OCI-LY7 (cell line): ENCODE measurements at regions of chr11 and their contacts with region 1.

Region 1: DNA sequence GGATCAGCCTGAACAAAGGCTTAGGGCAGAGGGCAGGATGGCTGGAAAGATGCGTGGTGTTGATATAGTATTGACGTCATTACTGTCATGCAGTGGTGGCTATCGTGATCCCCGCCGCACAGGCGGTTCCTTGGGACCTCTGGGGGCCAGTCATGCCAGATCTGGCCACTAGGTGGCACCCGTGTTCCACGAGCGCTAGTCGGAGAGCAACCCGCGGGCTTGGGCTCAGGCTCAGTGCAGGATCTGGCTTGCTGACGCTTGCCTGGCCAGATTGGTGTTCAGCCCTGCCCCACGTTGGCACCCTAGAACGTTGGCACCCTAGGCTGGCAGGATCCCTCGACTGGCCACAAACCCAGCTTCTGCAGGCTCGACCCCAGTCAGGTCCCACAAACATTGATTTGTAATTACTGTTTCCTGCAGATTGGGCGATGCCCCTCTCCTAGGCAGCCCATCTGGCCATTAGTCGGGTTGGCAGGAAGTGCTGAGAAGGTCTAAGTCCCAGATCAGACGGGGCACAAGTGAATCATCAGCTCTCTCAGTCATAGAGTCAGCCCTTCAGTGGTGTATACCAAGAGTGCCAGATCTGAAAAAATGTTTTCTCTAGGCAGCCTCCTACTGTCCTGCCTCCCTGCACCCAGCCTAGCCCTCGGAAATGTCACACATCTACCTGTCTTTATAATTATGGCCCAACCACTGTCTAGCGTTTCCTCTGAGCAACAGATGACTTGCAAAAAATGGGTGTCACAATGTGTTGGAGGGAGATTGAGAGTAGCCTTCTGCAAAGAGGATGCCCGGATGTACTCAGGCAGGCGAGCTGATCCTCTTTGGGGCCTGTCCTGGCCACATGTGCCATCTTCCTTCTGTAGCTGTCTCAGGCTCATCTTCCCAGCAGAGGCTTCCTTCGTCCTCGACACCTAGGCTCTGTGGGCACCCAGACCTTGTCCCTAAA is 315.3 kb downstream of the TMEM135 start:
- DNase-seq: peak; percentile 91
- H3K4me3 ChIP-seq: no peak overlapping the region
- H3K27ac ChIP-seq: peak overlapping the region; percentile 92
- H3K4me1 ChIP-seq: peaks cover 79% of the 10 kb centered on the region
- CTCF ChIP-seq: peak; percentile 96

Region 2: DNA sequence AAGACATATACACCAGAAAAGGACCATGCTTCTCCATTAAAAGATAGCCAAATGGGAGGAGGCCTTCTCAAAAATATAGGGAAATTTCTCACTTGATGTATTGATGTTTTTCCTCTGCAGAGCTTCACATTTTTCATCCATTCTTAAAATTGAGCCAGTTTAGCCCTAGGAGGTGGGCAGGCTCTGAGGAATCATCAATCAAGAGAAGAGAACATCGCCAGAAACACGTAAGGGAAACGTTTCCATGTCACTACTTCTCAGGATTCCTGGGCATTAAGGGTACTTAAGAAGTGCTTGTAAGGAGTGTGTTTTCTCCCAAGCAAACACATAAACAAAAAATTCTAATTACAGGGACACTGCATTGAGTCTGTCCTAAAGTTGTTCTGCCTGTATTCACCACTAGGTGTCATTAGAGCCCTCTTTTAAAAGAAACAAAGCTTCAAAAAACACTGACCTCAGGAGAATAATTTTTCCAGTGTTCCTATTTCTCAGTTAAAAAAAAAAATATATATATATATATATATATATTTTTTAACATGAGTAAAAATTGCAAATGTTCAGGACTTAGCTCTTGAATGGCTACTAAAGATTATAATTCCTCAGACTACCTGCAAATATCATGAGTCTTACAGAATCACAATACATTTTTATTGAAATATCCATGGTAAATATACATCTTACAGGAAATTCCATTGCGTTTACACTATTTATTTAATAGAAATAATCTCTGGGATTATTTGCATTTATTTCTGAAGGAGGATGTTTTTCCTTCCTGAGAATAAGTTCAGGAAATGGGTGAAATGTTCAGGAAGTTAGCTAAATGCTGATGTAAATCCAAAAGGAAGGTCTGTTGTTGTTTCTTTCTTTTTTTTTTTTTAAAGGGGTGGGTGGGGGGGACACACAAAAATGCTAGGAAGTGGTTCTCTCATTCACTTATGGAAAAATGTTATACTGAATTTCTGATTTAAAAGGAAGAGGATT is 413.8 kb before region 1 on chr11:
- CTCF ChIA-PET with region 1: interaction called, 4 read pairs
- POLR2A ChIA-PET with region 1: no interaction called
- intact Hi-C with region 1: loop called (anchors 2 kb)
- DNase-seq: peak; percentile 62
- H3K4me3 ChIP-seq: no peak overlapping the region
- H3K27ac ChIP-seq: no peak overlapping the region
- H3K4me1 ChIP-seq: no peaks in the 10 kb centered on the region
- CTCF ChIP-seq: peak; percentile 80

Region 3: DNA sequence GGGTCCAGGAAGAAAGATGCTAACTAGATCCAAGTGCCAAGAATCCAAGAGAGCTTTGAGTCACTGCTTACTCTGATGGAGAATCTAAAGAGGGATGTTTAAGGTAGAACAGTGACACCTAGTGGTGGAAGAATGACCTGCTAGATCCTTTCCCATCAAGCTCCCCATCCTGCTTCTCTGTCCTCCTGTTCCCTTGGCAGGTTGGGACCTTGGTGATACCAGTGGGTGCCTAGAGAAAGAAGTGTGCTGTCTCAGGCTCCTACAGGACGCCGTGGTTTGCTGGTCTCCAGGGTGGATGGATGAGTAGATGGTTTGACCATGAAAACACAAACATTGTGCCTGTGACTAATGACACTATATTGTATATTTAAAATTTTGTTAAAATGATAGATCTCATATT is 68.4 kb after region 1 on chr11:
- CTCF ChIA-PET with region 1: interaction called, 42 read pairs
- POLR2A ChIA-PET with region 1: interaction called, 17 read pairs
- intact Hi-C with region 1: loop called (anchors 1 kb)
- DNase-seq: peak; percentile 82
- H3K4me3 ChIP-seq: no peak overlapping the region
- H3K27ac ChIP-seq: no peak overlapping the region
- H3K4me1 ChIP-seq: peaks cover 33% of the 10 kb centered on the region
- CTCF ChIP-seq: peak; percentile 83

Region 4: GRCh38 chr11:87454241-87454640 is 101.2 kb after region 1 on chr11:
- CTCF ChIA-PET with region 1: interaction called, 11 read pairs
- POLR2A ChIA-PET with region 1: interaction called, 15 read pairs
- intact Hi-C with region 1: loop called (anchors 1 kb)
- DNase-seq: peak; percentile 91
- H3K4me3 ChIP-seq: peak overlapping the region; percentile 55
- H3K27ac ChIP-seq: peak overlapping the region; percentile 96
- H3K4me1 ChIP-seq: peaks cover 82% of the 10 kb centered on the region
- CTCF ChIP-seq: no peak

Region 5: DNA sequence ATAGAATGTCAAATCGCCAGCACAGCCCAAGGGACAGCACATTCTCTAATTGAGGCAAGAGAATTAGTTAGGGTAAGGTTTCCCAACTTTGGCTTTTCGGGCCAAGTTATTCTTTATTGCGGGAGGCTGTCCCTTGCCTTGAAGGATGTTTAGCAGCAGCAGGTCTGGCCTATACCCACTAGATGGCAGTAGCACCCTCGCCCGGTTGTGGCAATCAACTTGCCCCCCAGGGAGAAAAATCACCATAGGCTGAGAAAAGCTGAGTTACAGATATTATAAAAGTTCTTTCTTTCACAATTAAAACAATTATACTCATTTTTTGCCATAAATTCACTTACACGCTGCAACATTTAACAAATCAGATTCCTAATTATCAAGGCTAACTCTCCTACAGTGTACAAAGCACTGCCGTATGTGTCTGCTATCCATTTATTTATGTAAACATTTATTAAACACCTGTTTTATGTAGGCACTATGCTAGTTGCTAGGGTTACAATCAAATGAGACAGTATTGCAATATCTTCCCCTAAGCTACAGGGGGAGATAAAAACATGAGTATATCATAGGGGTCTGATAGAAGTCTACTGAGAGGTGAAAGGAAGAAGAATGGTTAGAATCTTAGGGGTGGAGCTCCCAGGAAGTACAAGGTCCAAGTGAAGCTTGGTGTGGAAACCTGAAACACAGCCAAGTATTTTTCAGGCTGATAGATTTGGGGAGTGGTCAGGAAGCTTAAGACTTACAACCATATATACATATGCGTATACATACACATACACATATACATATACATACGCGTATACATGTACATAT is 369.9 kb after region 1 on chr11:
- CTCF ChIA-PET with region 1: no interaction called
- POLR2A ChIA-PET with region 1: interaction called, 3 read pairs
- intact Hi-C with region 1: loop called (anchors 5 kb)
- DNase-seq: peak; percentile 47
- H3K4me3 ChIP-seq: no peak overlapping the region
- H3K27ac ChIP-seq: no peak overlapping the region
- H3K4me1 ChIP-seq: no peaks in the 10 kb centered on the region
- CTCF ChIP-seq: peak; percentile 87

Region 6: DNA sequence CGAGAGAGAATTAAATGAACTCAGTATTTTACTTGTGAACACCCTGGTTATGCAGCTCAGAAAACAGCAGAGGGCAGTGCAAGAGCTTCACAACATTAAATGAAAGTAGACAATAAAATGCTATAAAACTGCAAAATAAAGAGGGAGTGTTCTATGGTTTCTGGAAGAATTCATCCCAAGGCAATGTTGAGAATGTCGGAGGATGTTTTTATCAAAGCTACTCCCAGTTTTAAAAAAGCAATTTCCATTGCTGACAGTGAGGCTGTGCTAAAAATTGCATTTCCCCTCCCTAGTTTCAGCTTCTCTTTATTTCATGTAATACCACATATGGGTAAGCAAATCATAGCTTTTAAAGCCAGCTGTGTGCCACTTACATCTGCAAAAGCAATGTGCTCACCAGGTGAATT is 525.3 kb after region 1 on chr11:
- CTCF ChIA-PET with region 1: no interaction called
- POLR2A ChIA-PET with region 1: no interaction called
- intact Hi-C with region 1: loop called (anchors 5 kb)
- DNase-seq: peak; percentile 53
- H3K4me3 ChIP-seq: no peak overlapping the region
- H3K27ac ChIP-seq: peak overlapping the region; percentile 21
- H3K4me1 ChIP-seq: peaks cover 13% of the 10 kb centered on the region
- CTCF ChIP-seq: peak; percentile 85